ENCODE measurements at regions of chr12 and their contacts with region 1.

Region 1: GRCh38 chr12:42129595-42130204 is 15.0 kb downstream of the GXYLT1 start:
- DNase-seq: peak; percentile 27
- ATAC-seq: peak; percentile 41
- H3K4me3 Mint-ChIP-seq: no peak overlapping the region
- H3K27ac Mint-ChIP-seq: no peak overlapping the region
- H3K4me1 Mint-ChIP-seq: peaks cover 42% of the 10 kb centered on the region
- H3K27me3 Mint-ChIP-seq: no peaks in the 10 kb centered on the region
- CTCF ChIP-seq: peak; percentile 50

Region 2: GRCh38 chr12:42056130-42056529 is 73.6 kb before region 1 on chr12:
- CTCF ChIA-PET with region 1: no interaction called
- POLR2A ChIA-PET with region 1: no interaction called
- intact Hi-C with region 1: no loop called
- DNase-seq: no peak
- ATAC-seq: no peak
- H3K4me3 Mint-ChIP-seq: no peak overlapping the region
- H3K27ac Mint-ChIP-seq: no peak overlapping the region
- H3K4me1 Mint-ChIP-seq: no peaks in the 10 kb centered on the region
- H3K27me3 Mint-ChIP-seq: peaks cover 18% of the 10 kb centered on the region
- CTCF ChIP-seq: no peak

Region 3: GRCh38 chr12:42172441-42173210 is 42.9 kb after region 1 on chr12:
- CTCF ChIA-PET with region 1: no interaction called
- POLR2A ChIA-PET with region 1: no interaction called
- intact Hi-C with region 1: no loop called
- DNase-seq: no peak
- ATAC-seq: no peak
- H3K4me3 Mint-ChIP-seq: no peak overlapping the region
- H3K27ac Mint-ChIP-seq: no peak overlapping the region
- H3K4me1 Mint-ChIP-seq: peaks cover 16% of the 10 kb centered on the region
- H3K27me3 Mint-ChIP-seq: no peaks in the 10 kb centered on the region
- CTCF ChIP-seq: no peak

Region 4: GRCh38 chr12:42332301-42333285 is 202.9 kb after region 1 on chr12:
- CTCF ChIA-PET with region 1: interaction called, 7 read pairs
- POLR2A ChIA-PET with region 1: no interaction called
- intact Hi-C with region 1: loop called (anchors 10 kb)
- DNase-seq: peak; percentile 55
- ATAC-seq: peak; percentile 71
- H3K4me3 Mint-ChIP-seq: no peak overlapping the region
- H3K27ac Mint-ChIP-seq: no peak overlapping the region
- H3K4me1 Mint-ChIP-seq: peaks cover 58% of the 10 kb centered on the region
- H3K27me3 Mint-ChIP-seq: no peaks in the 10 kb centered on the region
- CTCF ChIP-seq: peak; percentile 81

Measured in activated CD8-positive, alpha-beta T cell treated with anti-CD3 and anti-CD28 coated beads for 36 hours (primary cell).